Cardiac septum (tissue), 1 donor: ENCODE measurements at regions of chr4 and their contacts with region 1.

Region 1: GRCh38 chr4:15882675-15883086 is 55.9 kb downstream of the FGFBP1 start:
- DNase-seq: peak; percentile 79

Region 2: DNA sequence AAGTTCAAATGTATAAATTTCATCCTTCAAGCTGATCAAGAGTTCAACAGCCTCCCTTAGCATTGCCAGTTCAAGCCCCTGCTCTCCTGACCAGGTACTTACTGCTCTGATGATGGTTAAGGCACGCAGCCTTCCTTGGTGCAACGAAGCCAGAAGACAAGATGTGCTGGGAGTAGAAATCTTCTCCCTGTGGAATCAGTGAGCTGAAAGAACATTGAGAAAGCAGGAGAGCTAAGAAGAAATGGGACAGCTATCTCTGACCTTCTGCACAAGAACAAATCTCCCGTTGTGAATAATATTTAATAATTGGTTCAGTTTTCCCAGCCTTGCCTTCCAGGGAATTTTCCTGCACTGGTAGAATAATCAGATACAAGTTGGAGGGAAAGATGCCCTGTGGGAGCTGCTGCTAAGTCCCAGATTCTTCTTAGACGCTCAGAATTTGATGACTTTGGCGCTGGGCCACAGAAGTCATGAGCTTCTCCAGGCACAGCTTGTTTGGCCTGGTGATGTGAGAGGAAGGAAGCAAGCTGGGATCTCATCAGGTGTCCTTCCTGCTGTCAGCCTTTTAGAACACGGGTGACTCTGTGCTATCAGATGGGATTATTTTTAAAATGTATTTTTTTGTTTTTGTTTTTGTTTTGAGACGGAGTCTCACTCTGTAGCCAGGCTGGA is 26.7 kb before region 1 on chr4:
- intact Hi-C with region 1: no loop called
- DNase-seq: peak; percentile 81

Region 3: DNA sequence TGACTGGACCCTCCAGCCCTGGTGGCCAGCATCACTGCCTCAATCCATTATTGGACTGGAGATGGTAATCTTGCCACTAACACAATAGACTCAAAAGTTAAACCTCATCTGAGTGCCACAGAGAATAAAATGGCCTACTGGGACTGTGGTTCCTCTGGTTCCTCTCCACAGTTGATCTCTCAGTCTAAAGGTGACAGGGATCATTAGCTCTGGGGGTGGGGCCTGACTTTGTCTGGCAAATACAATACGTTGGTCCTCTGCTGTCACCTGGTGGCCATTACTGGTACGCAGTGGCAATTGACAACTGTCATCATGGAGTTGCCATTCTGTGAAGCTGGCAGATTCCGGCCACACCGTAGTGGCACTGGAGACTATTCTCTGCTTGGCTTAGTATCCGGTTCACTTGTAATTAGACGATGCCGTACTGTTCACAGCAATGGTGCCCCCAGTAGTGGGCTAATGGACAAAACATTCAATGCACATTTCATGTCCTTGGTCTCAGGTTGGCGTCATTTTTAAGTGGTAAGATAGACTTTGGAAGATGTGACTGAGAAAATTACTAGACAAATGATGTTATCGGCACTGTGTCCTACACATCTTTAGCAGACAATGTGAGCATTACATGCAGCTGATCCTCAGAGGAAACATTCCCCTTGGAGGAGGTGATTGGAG is 73.6 kb after region 1 on chr4:
- intact Hi-C with region 1: loop called (anchors 1 kb)
- DNase-seq: peak; percentile 84

Region 4: DNA sequence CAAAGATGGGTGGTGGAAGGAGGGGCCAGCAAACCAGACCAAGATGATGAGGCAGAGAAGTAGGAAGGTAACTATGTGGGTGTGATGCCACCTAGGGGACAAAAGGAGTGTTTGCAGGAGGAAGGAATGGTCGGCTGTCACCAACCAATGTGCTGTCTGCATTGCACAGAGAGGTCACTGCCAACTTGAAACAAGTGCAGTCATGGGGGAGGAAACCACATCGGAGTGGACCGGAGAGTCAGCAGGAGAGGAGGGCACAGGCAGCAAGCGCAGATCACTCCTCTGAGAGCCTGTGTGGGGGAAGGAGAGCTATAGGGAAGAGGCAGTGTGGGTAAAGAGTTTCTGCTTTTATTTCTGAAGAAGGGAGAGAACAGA is 118.8 kb after region 1 on chr4:
- intact Hi-C with region 1: loop called (anchors 1 kb)
- DNase-seq: no peak

Region 5: GRCh38 chr4:16264798-16265197 is 382.1 kb after region 1 on chr4:
- intact Hi-C with region 1: loop called (anchors 10 kb)
- DNase-seq: no peak